WTC11 (cell line): ENCODE measurements at regions of chr10 and their contacts with region 1.

Region 1: DNA sequence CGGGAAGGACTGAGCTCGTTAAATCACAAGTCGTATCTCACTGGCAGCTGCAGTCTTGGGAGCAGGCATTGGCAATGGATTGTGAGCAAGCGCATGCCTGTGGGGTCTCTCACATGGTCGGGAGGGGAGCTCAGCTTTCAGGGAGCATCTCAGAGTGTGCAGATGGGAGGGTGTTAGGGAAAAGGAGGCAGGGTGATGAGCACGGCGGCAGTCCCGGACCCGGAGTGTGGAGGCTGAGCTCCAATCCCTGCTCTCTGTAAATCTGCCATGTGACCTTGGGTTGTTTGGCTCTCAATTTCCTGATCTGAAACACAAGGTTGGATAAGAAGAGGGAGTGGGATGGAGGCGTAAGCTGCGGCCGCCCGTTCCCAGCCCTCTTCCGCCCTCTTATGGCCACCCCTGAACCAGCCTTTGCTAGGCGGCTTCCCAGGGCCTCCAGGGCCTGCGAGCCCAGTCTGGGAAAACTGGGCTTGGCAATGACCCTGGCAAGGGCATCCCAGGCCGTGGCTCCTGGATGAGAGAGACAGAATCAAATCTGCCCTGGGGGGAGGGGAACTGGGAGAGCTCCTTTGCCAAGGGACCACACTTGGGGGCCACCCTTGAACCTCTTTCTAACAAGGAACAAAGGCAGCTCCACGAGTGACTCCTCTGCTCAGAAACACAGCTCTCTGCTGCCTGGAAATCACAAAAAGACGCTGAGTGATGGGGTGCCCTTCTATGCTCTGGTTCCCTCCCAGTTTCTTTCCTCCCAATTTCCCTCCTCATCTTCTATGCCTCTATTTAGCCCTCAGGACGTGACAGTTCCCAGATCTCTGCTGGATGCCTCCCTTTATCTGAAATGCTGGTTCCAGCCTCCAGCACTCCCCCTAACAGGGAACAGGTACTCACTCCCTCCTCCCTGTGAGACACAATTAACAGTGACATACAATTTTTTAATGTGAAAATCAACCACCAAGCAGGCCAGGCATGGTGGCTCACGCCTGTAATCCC is 41.7 kb upstream of the LOXL4 start:
- DNase-seq: peak; percentile 81
- ATAC-seq: peak; percentile 92
- H3K4me3 Mint-ChIP-seq: peak overlapping the region; percentile 58
- H3K27ac Mint-ChIP-seq: peak overlapping the region; percentile 52; the same call in 1 of the 2 replicates
- H3K4me1 Mint-ChIP-seq: peaks cover 17% of the 10 kb centered on the region
- H3K27me3 Mint-ChIP-seq: no peaks in the 10 kb centered on the region
- CTCF ChIP-seq: peak; percentile 43

Region 2: DNA sequence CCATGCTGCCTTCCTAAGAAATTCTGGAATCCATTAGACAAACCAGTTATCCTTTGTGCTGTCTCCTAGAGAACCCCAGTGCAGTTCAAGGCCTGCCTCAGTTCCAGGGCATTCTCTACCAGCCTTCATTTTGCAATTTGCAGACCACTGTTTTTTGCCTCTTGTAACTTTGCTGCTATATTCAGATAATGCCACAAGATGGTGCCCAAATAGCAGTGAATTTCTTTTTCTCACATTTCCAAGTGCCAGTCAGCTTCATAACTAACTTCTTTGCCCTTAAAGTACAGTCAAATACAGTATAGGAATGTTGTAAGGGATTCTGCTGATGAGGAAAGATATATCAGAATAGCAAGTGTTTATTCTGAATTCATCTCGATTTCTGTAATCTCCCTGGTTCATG is 66.8 kb before region 1 on chr10:
- CTCF ChIA-PET with region 1: interaction called, 40 read pairs
- POLR2A ChIA-PET with region 1: no interaction called
- DNase-seq: no peak
- ATAC-seq: peak; percentile 36; the same call in 1 of the 2 replicates
- H3K4me3 Mint-ChIP-seq: no peak overlapping the region
- H3K27ac Mint-ChIP-seq: no peak overlapping the region
- H3K4me1 Mint-ChIP-seq: no peaks in the 10 kb centered on the region
- H3K27me3 Mint-ChIP-seq: no peaks in the 10 kb centered on the region
- CTCF ChIP-seq: no peak

Region 3: DNA sequence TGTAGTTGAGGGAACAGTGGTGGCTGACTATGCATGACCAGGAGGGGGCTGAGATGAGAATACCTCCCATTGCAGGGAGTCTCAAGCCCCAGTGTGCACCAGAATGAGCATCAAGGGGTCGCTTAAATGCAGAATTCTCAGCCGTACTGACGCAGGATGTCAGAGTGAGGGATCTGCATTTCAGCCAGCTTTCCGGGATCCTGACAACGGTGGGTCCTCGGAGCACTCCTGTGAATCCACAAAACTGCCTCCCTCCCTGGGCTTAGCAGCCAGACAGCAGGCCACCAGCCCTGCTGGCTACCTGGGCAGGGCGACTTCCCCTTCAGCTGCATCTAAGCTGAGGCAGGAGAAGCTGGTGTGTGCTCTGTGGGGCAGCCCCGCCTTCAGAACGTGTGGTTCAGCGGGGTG is 19.9 kb before region 1 on chr10:
- CTCF ChIA-PET with region 1: interaction called, 34 read pairs
- POLR2A ChIA-PET with region 1: no interaction called
- DNase-seq: no peak
- ATAC-seq: peak; percentile 86
- H3K4me3 Mint-ChIP-seq: no peak overlapping the region
- H3K27ac Mint-ChIP-seq: no peak overlapping the region
- H3K4me1 Mint-ChIP-seq: peaks cover 17% of the 10 kb centered on the region
- H3K27me3 Mint-ChIP-seq: no peaks in the 10 kb centered on the region
- CTCF ChIP-seq: no peak

Region 4: DNA sequence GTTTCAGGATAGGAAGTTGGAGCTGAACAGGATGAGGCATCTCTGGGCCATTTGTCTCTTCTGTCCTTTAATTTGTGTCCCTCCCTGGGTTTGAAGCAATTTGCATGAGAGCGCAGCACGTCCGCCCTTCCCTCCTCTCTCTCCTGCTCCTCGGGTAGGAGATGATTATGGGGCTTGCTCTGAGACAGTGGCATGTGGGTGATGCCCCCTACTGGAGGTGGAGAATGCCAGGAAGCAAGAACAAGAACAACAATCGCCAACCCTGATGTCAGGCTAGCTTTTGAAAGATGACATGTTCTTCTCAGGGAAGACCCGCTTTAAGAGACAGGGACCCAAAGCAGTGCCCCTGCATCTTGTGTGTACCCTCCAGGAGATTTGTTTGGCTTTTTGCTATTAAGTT is 22.2 kb after region 1 on chr10:
- CTCF ChIA-PET with region 1: interaction called, 25 read pairs
- POLR2A ChIA-PET with region 1: no interaction called
- DNase-seq: peak; percentile 62
- ATAC-seq: peak; percentile 98
- H3K4me3 Mint-ChIP-seq: no peak overlapping the region
- H3K27ac Mint-ChIP-seq: no peak overlapping the region
- H3K4me1 Mint-ChIP-seq: peaks cover 9% of the 10 kb centered on the region
- H3K27me3 Mint-ChIP-seq: no peaks in the 10 kb centered on the region
- CTCF ChIP-seq: peak; percentile 38; the same call in 1 of the 2 replicates

Region 5: DNA sequence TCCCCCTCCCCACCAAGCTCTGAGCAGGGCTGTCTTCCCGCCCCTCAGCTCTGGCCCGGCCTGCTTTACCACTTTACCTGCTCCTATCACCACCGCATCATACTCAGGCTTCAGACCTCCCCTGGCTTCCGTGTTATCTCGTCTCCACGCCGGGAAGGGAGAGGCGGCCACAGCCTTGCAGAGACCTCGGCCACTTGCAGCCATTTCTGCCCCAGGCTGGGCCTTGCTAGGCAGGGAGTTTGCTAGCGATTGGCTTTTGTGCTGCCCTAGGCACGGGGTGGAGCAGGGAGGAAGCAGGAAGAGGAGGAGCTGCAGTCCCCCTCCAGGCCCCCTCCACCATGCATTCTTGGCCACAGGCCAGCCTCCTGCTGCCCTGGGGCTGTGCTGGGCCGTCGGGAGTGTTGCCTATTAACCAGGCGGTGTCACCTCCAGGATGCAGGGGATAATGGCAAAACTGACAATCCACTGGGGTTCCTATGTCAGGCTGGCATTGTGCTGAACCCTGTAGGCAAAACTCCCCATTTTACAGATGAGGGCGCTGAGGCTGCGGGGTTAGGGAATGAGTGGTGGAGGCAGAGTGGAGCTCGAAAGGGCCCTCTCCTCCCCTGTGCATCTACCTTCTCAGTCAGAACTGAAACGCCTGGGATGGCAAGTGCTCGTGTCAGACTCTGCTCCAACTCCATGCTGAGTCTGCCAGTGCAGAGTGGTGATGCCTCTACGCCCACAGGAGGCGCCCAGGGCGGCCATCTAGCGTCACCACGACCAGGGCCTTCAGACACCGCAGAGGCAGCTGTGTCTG is 105.5 kb after region 1 on chr10 and contains the start of gene PYROXD2:
- CTCF ChIA-PET with region 1: interaction called, 20 read pairs
- POLR2A ChIA-PET with region 1: no interaction called
- DNase-seq: peak; percentile 78
- ATAC-seq: peak; percentile 95
- H3K4me3 Mint-ChIP-seq: peak within 1 kb of the TSS; percentile 83
- H3K27ac Mint-ChIP-seq: peak within 1 kb of the TSS; percentile 92
- H3K4me1 Mint-ChIP-seq: peaks cover 15% of the 10 kb centered on the region
- H3K27me3 Mint-ChIP-seq: no peaks in the 10 kb centered on the region
- CTCF ChIP-seq: no peak
- total RNA-seq, gene PYROXD2: 7.0 to 8.6 TPM (median 8.1 TPM) in 3 replicates